Activated B cell treated with CpG ODN at 0.5 μM for 24 hours (primary cell): ENCODE measurements at regions of chr19 and their contacts with region 1.

Region 1: GRCh38 chr19:20237761-20238623 is 71.0 kb downstream of the ZNF486 start:
- DNase-seq: peak; percentile 79
- ATAC-seq: peak; percentile 94
- H3K4me3 Mint-ChIP-seq: peak overlapping the region; percentile 100
- H3K27ac Mint-ChIP-seq: peak overlapping the region; percentile 93
- H3K4me1 Mint-ChIP-seq: peaks cover 23% of the 10 kb centered on the region
- H3K27me3 Mint-ChIP-seq: no peaks in the 10 kb centered on the region
- CTCF ChIP-seq: no peak

Region 2: DNA sequence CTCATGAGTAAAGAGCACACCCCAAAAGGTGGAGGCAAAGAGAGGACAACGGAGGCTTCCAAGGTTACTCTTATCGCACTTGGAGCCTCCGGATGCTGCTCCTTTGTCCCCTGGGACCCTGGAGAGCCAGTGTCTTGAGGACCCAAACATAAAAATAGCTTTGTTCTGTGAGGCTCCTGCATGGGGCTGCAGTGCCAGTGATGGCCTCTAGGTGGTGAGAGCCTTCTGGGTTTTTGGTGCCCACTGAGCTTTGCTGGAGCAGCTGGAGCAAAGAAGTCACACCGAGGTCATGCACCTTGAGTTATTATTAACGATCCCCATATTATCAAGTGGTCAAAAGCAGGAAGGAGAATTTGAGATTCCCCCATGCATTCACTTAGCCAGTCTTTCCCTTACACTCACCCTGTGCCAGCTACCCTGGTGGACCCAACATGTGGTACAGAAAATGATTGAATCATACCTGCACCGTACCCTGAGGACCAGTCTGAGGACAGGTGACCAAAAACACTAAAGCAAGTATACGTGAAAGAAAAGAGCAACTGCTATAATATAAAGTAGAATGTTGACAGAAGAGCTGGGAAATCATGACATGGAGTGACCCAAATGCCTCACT is 240.2 kb before region 1 on chr19:
- CTCF ChIA-PET with region 1: interaction called, 12 read pairs
- POLR2A ChIA-PET with region 1: no interaction called
- intact Hi-C with region 1: no loop called
- DNase-seq: peak; percentile 29
- ATAC-seq: peak; percentile 64
- H3K4me3 Mint-ChIP-seq: no peak overlapping the region
- H3K27ac Mint-ChIP-seq: no peak overlapping the region
- H3K4me1 Mint-ChIP-seq: no peaks in the 10 kb centered on the region
- H3K27me3 Mint-ChIP-seq: no peaks in the 10 kb centered on the region
- CTCF ChIP-seq: peak; percentile 45

Region 3: GRCh38 chr19:20051841-20052768 is 185.9 kb before region 1 on chr19:
- CTCF ChIA-PET with region 1: no interaction called
- POLR2A ChIA-PET with region 1: interaction called, 4 read pairs
- intact Hi-C with region 1: loop called (anchors 5 kb)
- DNase-seq: peak; percentile 55
- ATAC-seq: peak; percentile 95
- H3K4me3 Mint-ChIP-seq: peak overlapping the region; percentile 98
- H3K27ac Mint-ChIP-seq: peak overlapping the region; percentile 96
- H3K4me1 Mint-ChIP-seq: peaks cover 14% of the 10 kb centered on the region
- H3K27me3 Mint-ChIP-seq: no peaks in the 10 kb centered on the region
- CTCF ChIP-seq: no peak

Region 4: GRCh38 chr19:20167020-20167644 is 70.9 kb before region 1 on chr19 and contains the start of gene ZNF486:
- CTCF ChIA-PET with region 1: no interaction called
- POLR2A ChIA-PET with region 1: interaction called, 12 read pairs
- intact Hi-C with region 1: loop called (anchors 2 kb)
- DNase-seq: peak; percentile 80
- ATAC-seq: peak; percentile 96
- H3K4me3 Mint-ChIP-seq: peak within 1 kb of the TSS; percentile 99
- H3K27ac Mint-ChIP-seq: peak within 1 kb of the TSS; percentile 97
- H3K4me1 Mint-ChIP-seq: peaks cover 59% of the 10 kb centered on the region
- H3K27me3 Mint-ChIP-seq: no peaks in the 10 kb centered on the region
- CTCF ChIP-seq: no peak
- total RNA-seq, gene ZNF486: 13.5 and 16.2 TPM in 2 replicates

Region 5: GRCh38 chr19:20334760-20335159 is 96.8 kb after region 1 on chr19:
- CTCF ChIA-PET with region 1: no interaction called
- POLR2A ChIA-PET with region 1: no interaction called
- intact Hi-C with region 1: no loop called
- DNase-seq: no peak
- ATAC-seq: no peak
- H3K4me3 Mint-ChIP-seq: no peak overlapping the region
- H3K27ac Mint-ChIP-seq: no peak overlapping the region
- H3K4me1 Mint-ChIP-seq: no peaks in the 10 kb centered on the region
- H3K27me3 Mint-ChIP-seq: no peaks in the 10 kb centered on the region
- CTCF ChIP-seq: no peak

Region 6: GRCh38 chr19:20565321-20566018 is 327.5 kb after region 1 on chr19 and contains the start of gene ZNF737:
- CTCF ChIA-PET with region 1: no interaction called
- POLR2A ChIA-PET with region 1: interaction called, 6 read pairs
- intact Hi-C with region 1: loop called (anchors 5 kb)
- DNase-seq: peak; percentile 72
- ATAC-seq: peak; percentile 90
- H3K4me3 Mint-ChIP-seq: peak within 1 kb of the TSS; percentile 99
- H3K27ac Mint-ChIP-seq: peak within 1 kb of the TSS; percentile 99
- H3K4me1 Mint-ChIP-seq: peaks cover 32% of the 10 kb centered on the region
- H3K27me3 Mint-ChIP-seq: no peaks in the 10 kb centered on the region
- CTCF ChIP-seq: no peak
- total RNA-seq, gene ZNF737: 42.7 and 50.9 TPM in 2 replicates